ENCODE measurements at regions of chr2 and their contacts with region 1.

Region 1: DNA sequence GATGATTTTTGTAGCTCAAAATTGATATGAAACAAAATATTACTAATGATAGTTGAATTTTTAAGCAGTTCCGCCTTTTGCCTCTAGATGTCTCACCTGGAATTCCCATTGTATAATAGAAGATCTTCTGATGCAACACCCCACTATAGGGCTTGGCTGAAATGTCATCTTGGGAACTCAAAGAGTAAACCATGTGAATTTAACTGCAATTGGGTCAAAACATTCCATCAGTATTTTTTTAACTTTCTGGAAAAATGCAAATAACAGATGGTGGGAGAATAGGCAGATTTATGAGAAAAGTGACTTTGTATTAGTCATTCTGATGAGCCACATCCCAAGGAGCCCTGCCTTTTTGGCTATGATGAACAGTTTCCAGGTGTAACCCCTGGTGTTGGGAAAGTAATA is 489.9 kb downstream of the NYAP2 start:
- DNase-seq: no peak
- H3K4me3 ChIP-seq: no peak overlapping the region
- H3K27ac ChIP-seq: no peak overlapping the region
- H3K4me1 ChIP-seq: peaks cover 0 to 6% (median 0%) of the 10 kb centered on the region in 6 donors
- H3K27me3 ChIP-seq: no peaks in the 10 kb centered on the region
- CTCF ChIP-seq: peak in 10 of 11 experiments; percentile 6 to 61 (median 54)
- POLR2A ChIP-seq: no peak

Region 2: GRCh38 chr2:226800941-226801784 is 911.7 kb after region 1 on chr2:
- intact Hi-C with region 1: loop called (anchors 5 kb)
- DNase-seq: peak; percentile 92
- H3K4me3 ChIP-seq: peak overlapping the region; percentile 2 to 86 (median 45)
- H3K27ac ChIP-seq: peak overlapping the region in 6 of 8 donors; percentile 77 to 88 (median 83)
- H3K4me1 ChIP-seq: peaks cover 10 to 64% (median 43%) of the 10 kb centered on the region in 6 donors
- H3K27me3 ChIP-seq: peaks cover 0 to 78% (median 23%) of the 10 kb centered on the region in 7 donors
- CTCF ChIP-seq: peak in 1 of 11 experiments; percentile 12
- POLR2A ChIP-seq: no peak